ENCODE measurements at regions of chr19 and their contacts with region 1.

Region 1: GRCh38 chr19:5622463-5623396 is at the starts of genes SAFB and SAFB2:
- DNase-seq: peak; percentile 99 to 100 (median 100)
- H3K4me3 ChIP-seq: peak within 1 kb of the TSS; percentile 99
- H3K27ac ChIP-seq: peak within 1 kb of the TSS; percentile 87 to 94
- H3K4me1 ChIP-seq: peaks cover 20% of the 10 kb centered on the region
- H3K27me3 ChIP-seq: no peaks in the 10 kb centered on the region
- CTCF ChIP-seq: no peak
- EP300 ChIP-seq: peak; percentile 14
- POLR2A ChIP-seq: peak; percentile 91
- total RNA-seq, gene SAFB: 66.9 to 108 (median 88.7) TPM
- total RNA-seq, gene SAFB2: 51.3 to 173 (median 109) TPM

Region 2: GRCh38 chr19:5557691-5558090 is 65.0 kb before region 1 on chr19:
- intact Hi-C with region 1: no loop called
- DNase-seq: no peak
- H3K4me3 ChIP-seq: no peak overlapping the region
- H3K27ac ChIP-seq: no peak overlapping the region
- H3K4me1 ChIP-seq: no peaks in the 10 kb centered on the region
- H3K27me3 ChIP-seq: no peaks in the 10 kb centered on the region
- CTCF ChIP-seq: no peak
- EP300 ChIP-seq: no peak
- POLR2A ChIP-seq: no peak

Region 3: DNA sequence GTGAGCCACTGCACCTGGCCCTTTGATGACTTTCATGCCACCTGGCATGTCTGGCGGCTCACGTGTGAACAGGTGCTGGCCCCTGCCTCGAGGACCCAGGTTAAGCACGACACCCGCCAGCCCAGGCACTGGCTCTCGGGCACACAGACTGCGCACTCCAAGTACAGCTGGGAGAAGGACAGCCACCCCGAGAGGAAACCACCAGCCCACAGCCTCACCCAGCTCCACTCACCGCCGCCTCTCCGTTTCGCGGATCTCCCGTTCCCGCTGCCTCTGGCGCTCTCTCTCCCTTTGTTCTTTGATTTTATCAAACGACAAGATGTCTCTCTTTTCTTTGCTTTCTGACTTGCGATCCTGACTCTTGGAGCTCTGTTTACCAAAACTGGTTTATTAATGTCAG is 27.6 kb before region 1 on chr19:
- intact Hi-C with region 1: no loop called
- DNase-seq: no peak
- H3K4me3 ChIP-seq: no peak overlapping the region
- H3K27ac ChIP-seq: no peak overlapping the region
- H3K4me1 ChIP-seq: no peaks in the 10 kb centered on the region
- H3K27me3 ChIP-seq: no peaks in the 10 kb centered on the region
- CTCF ChIP-seq: no peak
- EP300 ChIP-seq: no peak
- POLR2A ChIP-seq: no peak

Region 4: DNA sequence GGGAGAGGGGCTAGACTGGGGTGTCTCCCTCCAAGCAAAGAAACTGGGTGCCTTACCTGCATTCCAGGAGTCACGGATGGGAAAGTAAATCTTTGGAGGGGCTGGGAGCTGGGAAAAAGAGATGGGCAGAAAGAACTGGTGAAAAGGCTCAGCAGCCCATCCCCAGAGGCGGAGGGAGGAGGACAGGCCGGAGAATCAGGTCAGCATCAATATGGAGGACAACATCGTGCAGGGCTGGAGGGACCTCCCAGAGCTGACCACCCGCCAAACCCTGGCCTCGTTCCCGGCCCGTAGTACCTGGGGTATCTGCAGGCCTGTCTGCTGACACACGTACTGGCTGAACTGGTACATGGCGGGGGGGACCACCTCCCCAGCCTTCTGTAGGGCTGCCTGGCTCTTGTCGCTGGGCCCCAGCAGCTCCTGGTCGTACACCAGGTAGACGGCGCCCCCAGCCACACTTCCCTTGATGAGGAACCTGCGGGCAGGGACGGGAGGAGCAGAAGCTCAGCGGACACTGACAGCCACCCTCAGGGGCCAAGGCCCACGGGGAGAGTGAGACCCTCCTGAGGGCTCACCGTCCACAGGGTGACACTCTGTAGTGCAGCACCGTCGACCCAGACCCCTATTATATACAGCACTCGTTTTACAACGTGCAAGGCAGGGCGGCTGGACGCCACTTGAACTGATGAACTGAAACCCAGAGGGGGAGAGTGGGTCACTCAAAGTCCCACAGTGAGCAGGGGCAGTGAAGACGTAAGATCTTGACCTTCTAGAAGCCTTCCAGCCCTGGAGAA is 56.8 kb after region 1 on chr19:
- intact Hi-C with region 1: loop called in 2 of 4 experiments (anchors 5 to 10 kb)
- DNase-seq: peak in 3 of 5 donors; percentile 41 to 63 (median 63)
- H3K4me3 ChIP-seq: peak overlapping the region; percentile 94
- H3K27ac ChIP-seq: peak overlapping the region in 1 of 2 donors; percentile 88
- H3K4me1 ChIP-seq: peaks cover 10% of the 10 kb centered on the region
- H3K27me3 ChIP-seq: no peaks in the 10 kb centered on the region
- CTCF ChIP-seq: no peak
- EP300 ChIP-seq: no peak
- POLR2A ChIP-seq: no peak

Region 5: GRCh38 chr19:5690125-5690954 is 67.6 kb after region 1 on chr19 and contains the start of gene RPL36:
- intact Hi-C with region 1: loop called in 1 of 4 experiments (anchors 10 kb)
- DNase-seq: peak; percentile 97 to 100 (median 99)
- H3K4me3 ChIP-seq: peak within 1 kb of the TSS; percentile 78
- H3K27ac ChIP-seq: peak within 1 kb of the TSS; percentile 51 to 93
- H3K4me1 ChIP-seq: peaks cover 14% of the 10 kb centered on the region
- H3K27me3 ChIP-seq: no peaks in the 10 kb centered on the region
- CTCF ChIP-seq: peak; percentile 99
- EP300 ChIP-seq: no peak
- POLR2A ChIP-seq: peak; percentile 96
- total RNA-seq, gene RPL36: 1,413 to 2,353 (median 1,897) TPM

Measured in ovary (tissue), 10 donors.